ENCODE measurements at regions of chr4 and their contacts with region 1.

Region 1: DNA sequence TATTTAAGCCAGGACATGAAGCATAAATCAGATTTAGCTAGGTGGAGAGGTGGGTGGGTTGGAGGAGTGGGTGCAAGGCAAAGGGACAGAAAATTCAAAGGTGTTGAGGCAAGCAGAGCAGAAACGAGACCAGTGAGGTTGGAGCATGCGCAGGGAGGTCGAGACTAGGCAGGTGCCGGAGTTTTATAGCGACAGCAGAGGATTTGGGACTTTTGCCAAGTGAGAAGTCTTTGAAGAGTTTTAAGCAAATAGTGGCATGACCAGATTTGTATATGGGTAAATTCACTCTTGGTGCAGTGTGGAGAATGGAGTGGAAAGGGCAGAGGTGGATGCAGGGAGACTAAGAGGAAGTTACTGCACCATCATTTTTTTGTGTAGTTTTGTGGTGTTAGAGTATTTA is 107.0 kb upstream of the TLR2 start:
- DNase-seq: no peak
- ATAC-seq: peak; percentile 20
- H3K4me3 ChIP-seq: no peak overlapping the region
- H3K27ac ChIP-seq: no peak overlapping the region
- H3K4me1 ChIP-seq: peaks cover 6% of the 10 kb centered on the region
- H3K27me3 ChIP-seq: no peaks in the 10 kb centered on the region
- CTCF ChIP-seq: no peak

Region 2: DNA sequence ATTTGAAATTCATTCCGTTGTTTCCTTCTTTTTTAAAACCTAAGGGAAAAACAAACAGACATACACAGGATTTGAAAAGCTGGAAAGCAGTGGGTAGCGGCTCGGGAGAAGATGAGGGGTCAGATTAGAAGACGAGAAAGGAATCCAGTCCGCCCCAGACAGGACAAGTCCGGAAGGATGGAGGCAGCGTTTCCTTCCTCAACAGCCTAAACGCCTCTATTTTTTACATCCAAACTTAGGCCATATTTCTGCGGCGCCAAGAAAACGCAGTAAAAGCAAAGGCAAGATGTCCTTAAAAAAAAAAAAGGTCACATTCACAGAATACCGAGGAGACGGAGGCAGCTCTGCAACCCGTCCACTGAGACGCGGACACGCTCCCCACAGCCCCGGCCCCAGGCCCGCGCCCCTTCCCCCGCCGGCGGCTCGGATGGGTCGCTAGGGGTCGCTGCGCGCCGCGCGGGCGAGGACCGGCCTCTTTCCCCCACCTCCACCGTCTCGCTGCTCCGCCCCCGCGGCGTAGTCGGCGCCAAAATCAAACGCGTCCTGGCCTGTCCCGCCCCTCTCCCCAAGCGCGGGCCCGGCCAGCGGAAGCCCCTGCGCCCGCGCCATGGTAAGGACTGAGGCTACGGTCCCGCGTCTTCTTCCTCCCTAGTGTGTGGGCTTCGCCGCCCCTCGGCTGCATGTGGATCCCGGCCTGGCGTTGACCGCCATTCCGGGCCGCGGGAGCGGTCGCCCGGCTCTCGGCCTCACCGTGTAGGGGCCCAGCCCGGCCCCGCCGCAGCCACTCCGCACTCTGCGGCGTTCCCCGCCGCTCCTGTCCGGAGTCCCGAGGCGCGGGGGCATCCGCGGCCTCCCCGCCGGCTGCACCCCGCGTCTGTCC is 232.7 kb before region 1 on chr4 and contains the start of gene MND1:
- intact Hi-C with region 1: loop called (anchors 5 kb)
- DNase-seq: peak; percentile 93
- ATAC-seq: peak; percentile 97
- H3K4me3 ChIP-seq: peak within 1 kb of the TSS; percentile 90
- H3K27ac ChIP-seq: no peak within 1 kb of the TSS
- H3K4me1 ChIP-seq: peaks cover 9% of the 10 kb centered on the region
- H3K27me3 ChIP-seq: no peaks in the 10 kb centered on the region
- CTCF ChIP-seq: peak; percentile 95
- total RNA-seq, gene MND1: not detected

Measured in upper lobe of right lung (tissue), 1 donor.